ENCODE measurements at regions of chr1 and their contacts with region 1.

Region 1: GRCh38 chr1:30718636-30719405 is 4.6 kb downstream of the MATN1 start:
- DNase-seq: peak; percentile 83
- H3K4me3 Mint-ChIP-seq: peak overlapping the region; percentile 81
- H3K27ac Mint-ChIP-seq: peak overlapping the region; percentile 98
- H3K4me1 Mint-ChIP-seq: peaks cover 22% of the 10 kb centered on the region
- H3K27me3 Mint-ChIP-seq: no peaks in the 10 kb centered on the region

Region 2: DNA sequence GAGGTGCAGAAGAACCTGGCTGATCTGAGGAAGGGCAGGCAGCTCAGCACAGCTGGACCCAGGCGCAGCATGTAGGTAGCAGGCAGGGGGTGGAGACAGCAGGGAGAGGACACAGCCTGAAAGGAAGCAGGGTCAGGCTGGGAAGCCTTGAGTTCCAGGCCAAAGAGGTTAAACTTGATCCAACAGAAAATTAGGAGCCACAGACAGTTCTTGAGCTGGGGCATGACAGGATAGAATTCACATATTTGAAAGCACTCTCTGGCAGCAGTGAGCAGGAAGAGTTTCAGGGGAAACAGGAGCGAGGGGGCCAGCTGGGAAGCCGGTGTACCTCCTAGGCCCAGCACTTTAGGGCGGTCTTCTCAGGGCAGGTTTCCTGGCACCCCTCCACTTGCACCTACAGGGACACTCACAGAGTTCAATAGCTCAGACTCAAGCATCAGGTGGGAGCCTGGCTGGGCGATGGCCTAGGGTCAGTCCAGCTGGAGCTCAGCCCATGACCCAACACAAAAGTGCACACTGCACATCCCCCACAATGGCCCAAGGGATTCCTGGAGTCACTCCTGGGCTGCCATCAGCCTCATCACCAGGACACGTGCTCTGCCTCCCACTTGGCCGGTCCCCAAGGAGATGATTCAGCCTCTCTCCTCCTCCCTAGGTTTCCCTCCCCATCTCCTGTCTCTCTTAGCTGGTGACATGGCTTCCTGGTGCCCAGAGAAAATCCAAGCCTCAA is 18.1 kb before region 1 on chr1:
- CTCF ChIA-PET with region 1: no interaction called
- POLR2A ChIA-PET with region 1: no interaction called
- DNase-seq: no peak
- H3K4me3 Mint-ChIP-seq: no peak overlapping the region
- H3K27ac Mint-ChIP-seq: no peak overlapping the region
- H3K4me1 Mint-ChIP-seq: no peaks in the 10 kb centered on the region
- H3K27me3 Mint-ChIP-seq: peaks cover 3% of the 10 kb centered on the region

Region 3: DNA sequence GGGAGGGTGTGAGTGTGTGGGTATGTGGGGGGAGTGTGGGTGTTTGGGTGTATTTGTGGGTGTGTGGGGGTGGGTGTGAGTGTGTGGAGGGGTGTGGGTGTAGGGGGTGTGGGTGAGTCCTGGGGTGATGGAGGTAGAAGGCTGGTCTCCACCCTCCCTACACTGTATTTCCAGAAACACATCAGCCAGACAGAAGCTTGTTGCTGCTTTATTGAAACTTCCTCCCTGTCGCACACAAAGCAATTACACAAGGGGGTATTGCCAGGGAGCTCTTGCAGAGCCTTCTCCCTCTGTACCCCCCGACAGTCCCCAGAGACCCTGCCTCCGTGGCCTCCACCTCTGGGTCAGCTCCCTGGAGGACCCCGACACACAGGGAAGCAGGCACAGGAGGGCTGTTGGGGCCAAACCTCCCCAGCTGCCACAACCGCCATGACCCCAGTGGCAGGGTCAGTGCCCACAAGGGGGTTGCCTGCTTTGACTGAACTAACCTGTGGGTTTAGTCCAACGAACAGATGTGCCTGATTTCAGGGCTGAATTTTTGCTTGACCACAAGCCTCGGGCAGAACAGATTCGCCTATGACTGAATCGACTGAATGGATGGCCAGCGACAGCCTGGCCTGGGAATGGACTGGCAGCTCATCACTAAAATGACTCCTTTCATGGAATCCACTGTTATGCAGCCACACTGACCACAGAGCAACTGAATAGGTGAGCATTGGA is 13.6 kb after region 1 on chr1:
- CTCF ChIA-PET with region 1: interaction called, 40 read pairs
- POLR2A ChIA-PET with region 1: no interaction called
- DNase-seq: no peak
- H3K4me3 Mint-ChIP-seq: no peak overlapping the region
- H3K27ac Mint-ChIP-seq: peak overlapping the region; percentile 72
- H3K4me1 Mint-ChIP-seq: peaks cover 12% of the 10 kb centered on the region
- H3K27me3 Mint-ChIP-seq: no peaks in the 10 kb centered on the region

Region 4: GRCh38 chr1:30756545-30757195 is 37.8 kb after region 1 on chr1:
- CTCF ChIA-PET with region 1: interaction called, 24 read pairs
- POLR2A ChIA-PET with region 1: no interaction called
- DNase-seq: peak; percentile 76
- H3K4me3 Mint-ChIP-seq: peak overlapping the region; percentile 96
- H3K27ac Mint-ChIP-seq: peak overlapping the region; percentile 97
- H3K4me1 Mint-ChIP-seq: peaks cover 77% of the 10 kb centered on the region
- H3K27me3 Mint-ChIP-seq: no peaks in the 10 kb centered on the region

Region 5: GRCh38 chr1:30779294-30780071 is 60.7 kb after region 1 on chr1:
- CTCF ChIA-PET with region 1: interaction called, 75 read pairs
- POLR2A ChIA-PET with region 1: interaction called, 10 read pairs
- DNase-seq: peak; percentile 90
- H3K4me3 Mint-ChIP-seq: no peak overlapping the region
- H3K27ac Mint-ChIP-seq: no peak overlapping the region
- H3K4me1 Mint-ChIP-seq: peaks cover 25% of the 10 kb centered on the region
- H3K27me3 Mint-ChIP-seq: peaks cover 9% of the 10 kb centered on the region

Region 6: DNA sequence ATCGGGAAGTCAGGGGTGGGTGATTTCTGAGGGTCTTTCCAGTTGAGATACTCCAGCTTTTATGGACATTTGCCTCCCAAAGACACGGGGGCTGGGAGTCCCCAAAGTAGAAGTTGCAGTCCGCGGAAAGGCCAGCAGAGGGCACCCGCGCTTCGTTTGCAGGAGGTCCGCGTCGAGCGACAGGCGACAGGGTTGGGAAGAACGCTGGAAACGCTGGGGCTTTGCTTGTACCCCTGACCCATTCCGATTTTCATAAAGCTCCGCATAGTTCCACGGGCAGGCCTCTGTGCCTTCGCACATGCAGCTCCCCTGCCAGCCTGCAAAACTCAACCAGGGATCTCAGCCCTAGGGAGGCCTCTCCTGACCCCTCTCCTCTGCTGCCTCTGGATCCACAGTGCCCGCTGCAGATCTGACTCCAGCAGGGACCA is 83.0 kb after region 1 on chr1:
- CTCF ChIA-PET with region 1: interaction called, 10 read pairs
- POLR2A ChIA-PET with region 1: no interaction called
- DNase-seq: peak; percentile 78
- H3K4me3 Mint-ChIP-seq: no peak overlapping the region
- H3K27ac Mint-ChIP-seq: no peak overlapping the region
- H3K4me1 Mint-ChIP-seq: peaks cover 6% of the 10 kb centered on the region
- H3K27me3 Mint-ChIP-seq: peaks cover 37% of the 10 kb centered on the region